ENCODE measurements at regions of chr10 and their contacts with region 1.

Region 1: DNA sequence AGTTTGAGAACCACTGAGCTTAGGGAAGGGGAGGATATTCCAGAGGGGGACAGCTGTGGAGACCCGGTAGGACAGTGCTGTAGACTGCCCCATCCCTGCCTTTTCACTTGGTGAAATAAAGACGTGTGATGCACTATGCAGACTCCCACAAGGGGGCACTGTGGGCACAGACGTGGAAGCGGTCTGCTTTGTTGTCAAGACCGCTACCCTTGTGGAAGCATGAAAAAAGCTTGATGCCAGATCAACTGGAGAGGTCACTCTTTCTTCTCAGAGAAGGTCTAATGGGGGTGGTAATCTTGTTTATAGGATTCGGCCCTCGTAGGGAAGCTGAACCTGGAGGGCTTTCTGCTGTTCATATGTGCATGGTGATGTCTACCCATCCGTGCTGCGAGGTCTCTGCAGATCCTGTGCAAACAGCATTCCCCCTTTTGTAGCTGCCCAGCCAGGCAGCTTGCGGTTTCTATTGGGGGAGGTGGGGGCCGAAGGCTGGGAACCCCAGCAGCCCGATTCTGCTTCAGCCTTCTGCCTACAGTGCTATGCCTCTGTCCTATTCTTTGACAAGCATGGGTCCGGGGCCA is 13.7 kb downstream of the RPS24 start:
- DNase-seq: peak; percentile 53
- H3K4me3 ChIP-seq: no peak overlapping the region
- H3K27ac ChIP-seq: no peak overlapping the region
- H3K4me1 ChIP-seq: no peaks in the 10 kb centered on the region
- H3K27me3 ChIP-seq: no peaks in the 10 kb centered on the region
- CTCF ChIP-seq: peak; percentile 92

Region 2: DNA sequence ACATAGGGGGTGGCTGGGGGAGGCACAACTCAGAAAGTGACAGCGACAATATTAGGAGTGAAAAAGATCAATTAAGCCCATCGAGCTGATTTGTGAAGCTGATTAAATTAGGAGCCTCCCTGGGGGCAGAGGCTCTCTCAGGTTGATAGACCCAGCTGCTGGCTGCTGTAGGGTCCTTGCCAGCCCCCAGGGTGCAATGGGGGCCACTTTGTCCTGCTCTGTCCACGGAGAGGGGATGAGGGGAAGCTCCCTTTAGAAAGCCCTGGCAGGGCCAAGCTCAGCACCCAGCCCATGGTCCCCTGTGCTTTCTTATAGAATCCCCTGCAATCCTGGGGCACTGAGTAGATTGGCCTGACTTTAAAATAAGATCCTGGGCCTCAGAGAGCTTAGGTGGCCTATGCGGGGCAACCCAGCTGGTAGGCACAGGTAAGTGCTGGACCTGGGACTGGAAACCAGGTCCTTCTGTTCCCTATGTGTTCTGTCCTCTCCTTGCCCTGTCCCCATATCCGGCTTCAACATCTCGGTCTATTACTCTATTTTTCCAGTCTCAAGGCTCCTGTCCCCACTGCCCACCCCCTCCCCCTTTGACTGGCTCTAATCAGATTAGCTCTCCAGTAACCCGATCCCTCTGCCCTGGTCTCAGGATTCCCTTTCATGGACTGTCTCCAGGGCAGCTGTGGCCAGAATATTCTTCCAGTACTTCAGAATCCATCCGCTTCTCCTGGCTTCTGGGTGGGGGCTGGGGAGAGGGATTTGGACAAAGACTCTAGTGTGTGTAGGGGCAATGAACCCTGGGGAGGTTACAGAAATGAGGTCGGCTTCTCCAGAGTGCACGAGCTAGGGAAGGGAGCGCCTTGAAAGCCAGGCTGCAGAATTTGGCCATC is 245.8 kb after region 1 on chr10:
- CTCF ChIA-PET with region 1: no interaction called
- dilution Hi-C with region 1: no loop called
- in situ Hi-C with region 1: no loop called
- intact Hi-C with region 1: no loop called
- DNase-seq: no peak
- H3K4me3 ChIP-seq: no peak overlapping the region
- H3K27ac ChIP-seq: no peak overlapping the region
- H3K4me1 ChIP-seq: no peaks in the 10 kb centered on the region
- H3K27me3 ChIP-seq: peaks cover 7% of the 10 kb centered on the region
- CTCF ChIP-seq: no peak

Region 3: DNA sequence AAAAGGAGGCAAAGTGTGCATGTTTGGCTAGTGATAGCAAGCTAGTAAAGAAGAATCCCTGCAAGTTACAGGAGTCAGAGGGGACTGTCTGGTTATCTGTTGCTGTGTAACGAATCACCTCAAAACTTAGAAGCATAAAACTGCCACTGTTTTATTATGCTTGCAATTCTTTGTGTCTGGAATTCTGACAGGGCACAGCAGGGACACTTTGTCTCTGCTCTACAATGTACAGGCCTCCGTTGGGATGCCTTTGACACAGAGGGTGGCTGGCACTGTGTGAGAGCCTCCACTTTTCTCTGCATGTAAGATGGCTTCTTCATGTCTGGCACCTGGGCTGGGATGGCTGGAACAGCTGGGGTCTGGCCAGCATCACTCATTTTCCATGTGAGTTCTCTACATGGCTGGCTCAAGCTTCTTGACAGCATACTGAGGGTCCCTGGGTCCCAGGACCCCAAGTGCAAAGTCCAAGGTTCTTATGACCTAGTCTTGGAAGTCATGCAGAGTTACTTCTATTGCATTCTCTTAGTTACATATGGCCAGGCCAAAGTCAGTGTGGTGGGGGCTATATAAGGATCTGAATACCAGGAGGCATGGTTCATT is 263.2 kb after region 1 on chr10:
- CTCF ChIA-PET with region 1: no interaction called
- dilution Hi-C with region 1: loop called (anchors 10 kb)
- in situ Hi-C with region 1: loop called in 1 of 2 experiments (anchors 25 kb)
- intact Hi-C with region 1: loop called (anchors 1 kb)
- DNase-seq: no peak
- H3K4me3 ChIP-seq: no peak overlapping the region
- H3K27ac ChIP-seq: no peak overlapping the region
- H3K4me1 ChIP-seq: no peaks in the 10 kb centered on the region
- H3K27me3 ChIP-seq: no peaks in the 10 kb centered on the region
- CTCF ChIP-seq: no peak

Region 4: DNA sequence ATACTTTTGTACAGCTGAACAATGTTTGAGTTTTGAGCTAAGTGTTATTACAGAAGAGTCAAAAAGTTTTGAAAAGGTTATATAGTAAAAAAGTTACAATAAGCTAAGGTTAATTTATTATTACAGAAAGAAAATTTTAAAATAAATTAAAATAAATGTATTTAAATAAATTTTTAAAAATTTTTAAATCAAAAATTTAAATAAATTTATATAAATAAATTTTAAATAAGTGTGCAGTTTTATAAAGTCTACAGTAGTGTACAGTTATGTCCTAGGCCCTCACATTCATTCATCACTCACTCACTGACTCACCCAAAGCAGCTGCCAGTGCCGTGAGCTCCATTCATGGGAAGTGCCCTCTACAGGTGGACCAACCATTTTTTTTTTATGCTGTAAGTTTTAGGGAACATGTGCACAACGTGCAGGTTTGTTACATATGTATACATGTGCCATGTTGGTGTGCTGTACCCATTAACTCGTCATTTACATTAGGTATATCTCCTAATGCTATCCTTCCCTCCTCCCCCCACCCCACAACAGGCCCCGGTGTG is 558.5 kb after region 1 on chr10:
- CTCF ChIA-PET with region 1: no interaction called
- dilution Hi-C with region 1: loop called (anchors 5 kb)
- in situ Hi-C with region 1: no loop called
- intact Hi-C with region 1: loop called (anchors 1 kb)
- DNase-seq: peak; percentile 61
- H3K4me3 ChIP-seq: no peak overlapping the region
- H3K27ac ChIP-seq: no peak overlapping the region
- H3K4me1 ChIP-seq: no peaks in the 10 kb centered on the region
- H3K27me3 ChIP-seq: peaks cover 3% of the 10 kb centered on the region
- CTCF ChIP-seq: peak; percentile 30 to 51

Region 5: DNA sequence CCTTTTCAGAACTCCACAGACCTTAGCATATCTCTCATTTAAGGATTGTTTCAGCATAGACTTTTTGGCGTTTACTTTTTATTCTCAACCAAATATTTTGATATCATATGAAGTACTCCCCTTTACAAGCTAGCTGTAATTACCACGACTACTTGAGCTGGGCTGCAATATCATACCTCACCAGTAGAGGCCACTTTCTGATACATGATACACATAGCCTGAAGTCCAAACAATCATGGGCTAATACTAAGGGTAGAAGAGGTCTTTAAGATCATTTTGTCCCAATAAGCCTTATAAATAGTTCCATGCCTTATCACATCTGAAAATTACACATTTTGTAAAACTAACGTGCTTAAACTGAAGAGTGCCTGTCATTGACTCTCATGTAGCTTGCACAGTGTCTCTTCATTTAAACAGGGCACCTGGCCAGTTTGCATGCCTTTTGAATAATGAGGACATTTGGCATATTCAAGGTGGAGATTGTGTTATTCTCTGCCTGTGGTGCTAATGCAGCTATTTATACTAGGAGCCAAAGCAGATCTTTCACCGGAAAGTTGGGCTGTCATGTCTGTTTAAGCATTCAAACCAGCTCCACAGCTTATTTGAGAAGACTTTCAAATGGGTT is 617.6 kb after region 1 on chr10:
- CTCF ChIA-PET with region 1: interaction called, 3 read pairs
- dilution Hi-C with region 1: loop called (anchors 5 kb)
- in situ Hi-C with region 1: no loop called
- intact Hi-C with region 1: no loop called
- DNase-seq: peak; percentile 20
- H3K4me3 ChIP-seq: no peak overlapping the region
- H3K27ac ChIP-seq: no peak overlapping the region
- H3K4me1 ChIP-seq: no peaks in the 10 kb centered on the region
- H3K27me3 ChIP-seq: peaks cover 2% of the 10 kb centered on the region
- CTCF ChIP-seq: peak; percentile 75 to 91

Region 6: GRCh38 chr10:79038841-79039201 is 991.4 kb after region 1 on chr10:
- CTCF ChIA-PET with region 1: no interaction called
- dilution Hi-C with region 1: loop called (anchors 10 kb)
- in situ Hi-C with region 1: no loop called
- intact Hi-C with region 1: no loop called
- DNase-seq: no peak
- H3K4me3 ChIP-seq: no peak overlapping the region
- H3K27ac ChIP-seq: no peak overlapping the region
- H3K4me1 ChIP-seq: no peaks in the 10 kb centered on the region
- H3K27me3 ChIP-seq: no peaks in the 10 kb centered on the region
- CTCF ChIP-seq: no peak

Measured in mammary epithelial cell (primary cell).